Activated naive CD4-positive, alpha-beta T cell treated with anti-CD3 and anti-CD28 coated beads for 36 hours (primary cell): ENCODE measurements at regions of chr9 and their contacts with region 1.

Region 1: DNA sequence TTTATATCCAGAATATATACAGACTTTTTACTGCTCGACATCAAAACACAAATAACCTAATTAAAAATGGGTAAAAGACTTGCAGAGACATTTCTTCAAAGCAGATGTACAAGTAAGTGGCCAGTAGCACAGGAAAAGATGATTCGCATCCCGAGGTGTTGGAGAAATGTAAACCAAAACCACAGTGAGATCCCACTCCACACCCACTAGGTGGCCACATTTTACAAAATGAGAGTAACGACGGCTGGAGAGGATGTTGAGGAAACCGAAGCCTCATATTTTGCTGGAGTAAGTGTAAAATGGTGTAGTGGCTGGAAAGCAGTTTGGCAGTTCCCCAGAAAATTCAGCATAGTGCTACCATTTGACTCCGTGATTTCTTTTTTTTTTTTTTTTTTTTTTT is 21.2 kb upstream of the GBGT1 start:
- DNase-seq: peak; percentile 69
- H3K4me3 Mint-ChIP-seq: no peak overlapping the region
- H3K27ac Mint-ChIP-seq: no peak overlapping the region
- H3K4me1 Mint-ChIP-seq: peaks cover 14% of the 10 kb centered on the region
- H3K27me3 Mint-ChIP-seq: peaks cover 36% of the 10 kb centered on the region

Region 2: DNA sequence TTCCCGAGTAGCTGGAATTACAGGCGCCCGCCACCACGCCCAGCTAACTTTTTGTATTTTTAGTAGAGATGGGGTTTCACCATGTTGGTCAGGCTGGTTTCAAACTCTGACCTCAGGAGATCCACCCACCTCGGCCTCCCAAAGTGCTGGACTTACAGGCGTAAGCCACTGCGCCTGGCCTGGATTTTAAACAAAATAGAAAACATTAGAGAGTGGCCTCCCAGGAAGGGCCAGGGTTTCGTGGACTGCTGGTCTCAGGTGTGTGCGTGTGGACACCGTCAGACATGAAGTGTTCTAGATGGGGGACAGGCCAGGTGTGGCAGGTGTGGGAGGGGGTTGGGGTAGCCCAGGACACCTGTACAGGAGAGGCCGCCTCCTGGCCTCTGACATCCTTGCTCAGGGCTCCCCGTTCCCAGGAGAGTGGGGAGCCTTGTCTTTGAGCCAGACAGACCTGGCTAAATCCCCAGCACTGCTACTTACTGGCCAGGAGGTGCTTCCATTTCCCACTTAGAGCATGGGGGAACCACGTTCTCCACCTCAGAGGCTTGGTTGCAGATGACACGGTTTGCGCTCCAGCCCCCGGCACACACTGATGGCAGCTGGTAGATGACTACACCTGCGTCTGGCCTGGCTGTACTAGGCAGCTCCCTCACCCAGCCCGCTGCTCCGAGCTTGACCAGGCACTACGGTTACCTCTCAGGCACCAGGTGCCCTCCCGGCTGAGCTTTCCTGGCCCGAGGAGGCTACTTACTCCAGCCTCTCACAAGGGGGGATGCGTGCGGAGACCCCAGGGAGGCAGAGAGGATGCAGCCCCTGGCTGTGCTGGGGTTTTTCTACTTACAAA is 14.0 kb before region 1 on chr9:
- CTCF ChIA-PET with region 1: interaction called, 29 read pairs
- intact Hi-C with region 1: no loop called
- DNase-seq: no peak
- H3K4me3 Mint-ChIP-seq: no peak overlapping the region
- H3K27ac Mint-ChIP-seq: no peak overlapping the region
- H3K4me1 Mint-ChIP-seq: no peaks in the 10 kb centered on the region
- H3K27me3 Mint-ChIP-seq: no peaks in the 10 kb centered on the region

Region 3: GRCh38 chr9:133238851-133239532 is 54.0 kb after region 1 on chr9:
- CTCF ChIA-PET with region 1: interaction called, 21 read pairs
- intact Hi-C with region 1: loop called (anchors 5 kb)
- DNase-seq: peak; percentile 83
- H3K4me3 Mint-ChIP-seq: peak overlapping the region; percentile 44
- H3K27ac Mint-ChIP-seq: no peak overlapping the region
- H3K4me1 Mint-ChIP-seq: peaks cover 7% of the 10 kb centered on the region
- H3K27me3 Mint-ChIP-seq: peaks cover 21% of the 10 kb centered on the region

Region 4: DNA sequence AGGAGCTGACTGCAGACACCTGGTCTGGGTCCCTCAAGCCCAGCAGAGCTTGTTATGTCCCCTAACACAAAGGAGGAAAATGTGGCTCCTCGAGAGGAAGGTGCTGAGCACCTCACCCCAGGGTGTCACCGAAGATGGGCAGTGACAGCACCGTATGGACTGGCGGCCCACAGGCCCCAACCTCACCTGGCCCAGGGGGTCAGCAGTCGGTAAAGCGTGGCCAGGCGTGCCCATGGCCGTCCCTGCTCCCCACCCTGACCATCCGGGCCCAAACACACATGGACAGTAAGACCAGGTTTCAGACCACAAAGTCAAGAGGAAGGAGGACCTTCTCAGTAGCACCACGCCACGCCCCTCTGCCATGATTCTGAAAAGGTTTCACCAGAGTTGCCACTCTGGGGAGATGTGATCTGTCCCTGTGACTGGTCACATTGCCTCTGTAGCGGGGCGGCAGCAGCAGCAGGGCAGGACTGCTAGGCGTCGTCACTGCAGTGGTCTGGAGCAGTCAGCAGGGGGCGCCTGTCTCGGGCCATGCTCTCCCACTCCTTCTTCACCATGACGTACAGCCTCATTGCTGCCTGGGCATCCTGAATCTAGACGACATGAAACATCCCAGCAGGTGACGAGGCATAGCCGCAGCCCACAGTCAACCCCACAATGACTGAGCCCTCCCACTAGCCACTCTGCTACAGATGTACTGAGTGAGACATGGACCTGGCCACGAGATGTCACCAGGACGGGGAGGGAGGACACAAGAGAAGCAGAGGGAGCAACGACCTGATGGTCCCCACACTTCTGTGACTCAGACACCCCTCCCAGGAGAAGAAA is 221.7 kb after region 1 on chr9:
- CTCF ChIA-PET with region 1: interaction called, 5 read pairs
- intact Hi-C with region 1: loop called (anchors 1 kb)
- DNase-seq: peak; percentile 84
- H3K4me3 Mint-ChIP-seq: no peak overlapping the region
- H3K27ac Mint-ChIP-seq: peak overlapping the region; percentile 39
- H3K4me1 Mint-ChIP-seq: peaks cover 10% of the 10 kb centered on the region
- H3K27me3 Mint-ChIP-seq: no peaks in the 10 kb centered on the region

Region 5: GRCh38 chr9:134217832-134218629 is 1033.1 kb after region 1 on chr9:
- CTCF ChIA-PET with region 1: no interaction called
- intact Hi-C with region 1: no loop called
- DNase-seq: peak; percentile 21
- H3K4me3 Mint-ChIP-seq: no peak overlapping the region
- H3K27ac Mint-ChIP-seq: no peak overlapping the region
- H3K4me1 Mint-ChIP-seq: no peaks in the 10 kb centered on the region
- H3K27me3 Mint-ChIP-seq: no peaks in the 10 kb centered on the region

Region 6: GRCh38 chr9:134458207-134458845 is 1273.4 kb after region 1 on chr9:
- CTCF ChIA-PET with region 1: no interaction called
- intact Hi-C with region 1: no loop called
- DNase-seq: no peak
- H3K4me3 Mint-ChIP-seq: no peak overlapping the region
- H3K27ac Mint-ChIP-seq: no peak overlapping the region
- H3K4me1 Mint-ChIP-seq: peaks cover 14% of the 10 kb centered on the region
- H3K27me3 Mint-ChIP-seq: no peaks in the 10 kb centered on the region